ENCODE measurements at regions of chr2 and their contacts with region 1.

Region 1: GRCh38 chr2:14560366-14561115 is 72.0 kb upstream of the LRATD1 start:
- DNase-seq: no peak
- H3K4me3 ChIP-seq: no peak overlapping the region
- H3K27ac ChIP-seq: no peak overlapping the region
- H3K4me1 ChIP-seq: no peaks in the 10 kb centered on the region
- H3K27me3 ChIP-seq: no peaks in the 10 kb centered on the region
- CTCF ChIP-seq: no peak

Region 2: GRCh38 chr2:14621114-14621513 is 60.6 kb after region 1 on chr2:
- intact Hi-C with region 1: loop called (anchors 5 kb)
- DNase-seq: no peak
- H3K4me3 ChIP-seq: no peak overlapping the region
- H3K27ac ChIP-seq: no peak overlapping the region
- H3K4me1 ChIP-seq: no peaks in the 10 kb centered on the region
- H3K27me3 ChIP-seq: no peaks in the 10 kb centered on the region
- CTCF ChIP-seq: no peak

Region 3: DNA sequence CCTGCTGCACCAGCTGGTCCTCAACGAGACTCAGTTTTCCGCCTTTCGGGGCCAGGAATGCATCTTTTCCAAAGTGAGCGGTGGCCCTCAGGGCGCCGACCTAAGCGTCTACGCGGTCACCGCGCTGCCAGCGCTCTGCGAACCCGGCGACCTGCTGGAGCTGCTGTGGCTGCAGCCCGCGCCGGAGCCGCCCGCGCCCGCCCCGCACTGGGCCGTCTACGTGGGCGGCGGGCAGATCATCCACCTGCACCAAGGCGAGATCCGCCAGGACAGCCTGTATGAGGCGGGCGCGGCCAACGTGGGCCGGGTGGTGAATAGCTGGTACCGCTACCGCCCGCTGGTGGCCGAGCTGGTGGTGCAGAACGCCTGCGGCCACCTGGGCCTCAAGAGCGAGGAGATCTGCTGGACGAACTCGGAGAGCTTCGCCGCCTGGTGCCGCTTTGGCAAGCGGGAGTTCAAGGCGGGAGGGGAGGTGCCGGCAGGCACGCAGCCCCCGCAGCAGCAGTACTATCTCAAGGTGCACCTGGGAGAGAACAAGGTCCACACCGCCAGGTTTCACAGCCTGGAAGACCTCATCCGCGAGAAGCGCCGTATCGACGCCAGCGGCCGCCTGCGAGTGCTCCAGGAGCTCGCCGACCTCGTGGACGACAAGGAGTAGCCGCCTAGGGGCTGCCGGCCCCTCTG is 73.8 kb after region 1 on chr2:
- intact Hi-C with region 1: loop called (anchors 5 kb)
- DNase-seq: peak; percentile 86
- H3K4me3 ChIP-seq: peak overlapping the region; percentile 70
- H3K27ac ChIP-seq: peak overlapping the region; percentile 78
- H3K4me1 ChIP-seq: no peaks in the 10 kb centered on the region
- H3K27me3 ChIP-seq: no peaks in the 10 kb centered on the region
- CTCF ChIP-seq: peak; percentile 65

Measured in colonic mucosa (tissue), 4 donors.